Transverse colon (tissue), 4 donors: ENCODE measurements at regions of chr14 and their contacts with region 1.

Region 1: DNA sequence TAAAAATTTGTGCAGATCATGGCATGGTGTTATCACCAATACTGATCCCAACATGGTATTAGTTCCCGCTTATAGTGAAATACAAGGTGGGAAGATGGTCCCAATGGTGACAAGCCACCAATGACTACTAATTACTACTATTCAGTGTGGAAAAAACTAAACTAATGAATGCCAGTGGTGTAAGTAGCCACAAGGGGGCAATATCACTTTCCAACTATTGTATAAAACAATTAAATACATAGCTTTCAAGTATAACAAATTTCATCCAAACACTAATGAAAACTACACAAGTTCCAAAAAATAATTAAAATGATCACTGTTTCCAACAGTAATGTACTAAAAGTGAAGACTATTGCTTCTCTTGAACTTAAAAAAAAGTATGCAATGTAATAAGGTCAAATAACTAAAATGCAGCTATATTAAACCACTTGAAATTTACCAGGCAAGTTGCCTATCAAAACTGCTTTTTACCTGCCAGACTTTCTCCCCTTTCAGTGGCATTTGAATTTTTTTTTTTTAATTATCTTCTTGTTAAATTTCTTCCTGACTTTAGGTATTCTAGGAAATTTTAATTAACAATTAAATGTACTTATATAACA is 58.0 kb downstream of the PAPLN start:
- DNase-seq: no peak
- H3K4me3 ChIP-seq: no peak overlapping the region
- H3K27ac ChIP-seq: peak overlapping the region in 2 of 4 donors; percentile 68 to 70
- H3K4me1 ChIP-seq: peaks cover 0 to 42% (median 22%) of the 10 kb centered on the region in 4 donors
- H3K27me3 ChIP-seq: no peaks in the 10 kb centered on the region
- CTCF ChIP-seq: peak; percentile 70 to 79 (median 74)
- EP300 ChIP-seq: no peak
- POLR2A ChIP-seq: no peak

Region 2: DNA sequence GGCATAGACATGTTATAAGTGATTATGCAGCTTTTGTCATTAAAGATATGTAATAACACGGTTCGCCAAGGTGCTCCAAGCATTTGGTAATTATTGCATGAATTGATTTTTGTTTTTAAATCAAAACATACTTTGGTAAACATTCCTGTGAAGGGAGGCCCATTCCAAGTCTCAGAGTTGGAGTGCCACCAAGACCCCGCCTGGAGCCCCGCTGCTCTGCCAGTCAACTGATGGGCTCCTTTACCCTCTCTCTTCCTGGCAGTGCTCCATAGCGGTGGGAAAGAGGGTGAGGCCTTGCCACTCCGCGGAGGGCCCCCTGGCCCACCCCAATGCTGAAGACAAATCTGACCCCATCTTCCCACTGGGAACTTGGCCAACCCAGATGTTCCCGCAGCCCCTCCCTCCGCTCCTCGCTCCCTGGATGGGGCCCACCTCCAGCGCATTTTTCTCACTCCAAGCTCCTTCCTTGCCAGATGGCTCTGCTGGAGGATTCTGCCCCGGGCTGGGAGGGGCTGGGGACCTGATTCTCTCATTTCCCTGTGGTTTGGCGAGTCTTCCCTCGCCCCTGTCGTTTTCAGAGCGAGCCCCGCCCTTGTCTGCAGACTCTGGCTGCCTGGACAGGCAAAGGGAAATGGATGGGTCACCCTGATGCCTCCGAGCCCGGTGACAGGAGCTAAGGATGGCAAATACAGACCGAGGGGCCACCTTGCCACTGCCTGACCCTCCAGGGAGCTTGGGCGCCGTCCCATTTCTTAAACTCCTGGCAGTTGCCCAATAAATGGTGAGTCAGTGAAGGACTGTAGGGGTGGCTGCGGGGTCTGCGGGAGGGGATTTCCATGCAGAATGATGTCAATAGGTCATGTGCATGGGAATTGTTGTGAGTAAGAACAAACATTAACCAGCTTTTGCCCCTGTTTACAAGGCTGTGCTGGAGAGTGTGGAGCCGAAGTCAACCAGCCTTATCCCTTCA is 67.2 kb before region 1 on chr14:
- in situ Hi-C with region 1: no loop called
- intact Hi-C with region 1: no loop called
- DNase-seq: peak; percentile 38
- H3K4me3 ChIP-seq: no peak overlapping the region
- H3K27ac ChIP-seq: peak overlapping the region; percentile 9 to 63 (median 22)
- H3K4me1 ChIP-seq: peaks cover 0 to 18% (median 4%) of the 10 kb centered on the region in 4 donors
- H3K27me3 ChIP-seq: no peaks in the 10 kb centered on the region
- CTCF ChIP-seq: no peak
- EP300 ChIP-seq: no peak
- POLR2A ChIP-seq: no peak

Region 3: GRCh38 chr14:73463411-73463810 is 168.1 kb after region 1 on chr14:
- in situ Hi-C with region 1: loop called in 1 of 4 experiments (anchors 10 kb)
- intact Hi-C with region 1: no loop called
- DNase-seq: peak; percentile 26
- H3K4me3 ChIP-seq: peak overlapping the region in 2 of 4 donors; percentile 15 to 35
- H3K27ac ChIP-seq: peak overlapping the region; percentile 75 to 87 (median 86)
- H3K4me1 ChIP-seq: peaks cover 7 to 77% (median 61%) of the 10 kb centered on the region in 4 donors
- H3K27me3 ChIP-seq: no peaks in the 10 kb centered on the region
- CTCF ChIP-seq: no peak
- EP300 ChIP-seq: no peak
- POLR2A ChIP-seq: no peak

Region 4: DNA sequence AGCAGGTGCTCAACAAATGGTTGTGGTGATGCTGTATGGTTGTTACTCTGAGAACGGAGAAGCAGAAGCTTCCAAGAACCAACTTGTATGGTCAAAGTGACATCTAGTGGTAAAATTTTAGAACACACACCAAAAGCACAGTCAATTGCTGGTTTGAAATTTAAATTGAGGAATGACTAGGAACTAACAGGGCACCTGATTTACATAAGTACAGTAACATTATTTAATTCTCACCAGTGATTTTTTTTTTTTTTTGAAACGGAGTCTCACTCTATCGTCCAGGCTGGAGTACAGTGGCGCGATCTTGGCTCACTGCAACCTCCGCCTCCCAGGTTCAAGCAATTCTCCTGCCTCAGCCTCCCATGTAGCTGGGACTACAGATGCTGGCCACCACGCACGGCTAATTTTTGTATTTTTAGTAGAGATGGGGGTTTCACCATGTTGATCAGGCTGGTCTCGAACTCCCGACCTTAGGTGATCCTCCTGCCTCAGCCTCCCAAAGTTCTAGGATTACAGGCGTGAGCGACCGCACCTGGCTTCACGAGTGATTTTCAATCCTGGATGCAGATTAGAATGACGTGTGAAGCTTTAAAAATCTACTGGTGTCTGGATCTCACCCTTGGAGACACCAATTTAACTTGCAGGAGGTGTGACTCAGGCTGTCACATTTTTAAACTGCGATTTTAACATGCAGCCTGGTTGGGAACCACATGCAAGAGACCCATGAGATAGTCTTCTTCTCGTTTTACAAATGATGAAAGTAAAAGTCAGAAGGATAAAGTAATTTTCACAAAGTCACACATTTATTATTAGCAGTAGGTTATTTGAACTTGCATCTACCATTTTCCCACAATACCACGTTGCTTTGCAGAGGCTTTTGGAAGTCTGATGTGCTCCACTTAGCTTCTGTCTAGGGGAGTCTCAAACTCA is 177.2 kb after region 1 on chr14:
- in situ Hi-C with region 1: loop called (anchors 5 to 10 kb)
- intact Hi-C with region 1: loop called (anchors 2 kb)
- DNase-seq: no peak
- H3K4me3 ChIP-seq: no peak overlapping the region
- H3K27ac ChIP-seq: no peak overlapping the region
- H3K4me1 ChIP-seq: no peaks in the 10 kb centered on the region
- H3K27me3 ChIP-seq: no peaks in the 10 kb centered on the region
- CTCF ChIP-seq: peak; percentile 65 to 84 (median 73)
- EP300 ChIP-seq: no peak
- POLR2A ChIP-seq: no peak